ENCODE measurements at regions of chr6 and their contacts with region 1.

Region 1: DNA sequence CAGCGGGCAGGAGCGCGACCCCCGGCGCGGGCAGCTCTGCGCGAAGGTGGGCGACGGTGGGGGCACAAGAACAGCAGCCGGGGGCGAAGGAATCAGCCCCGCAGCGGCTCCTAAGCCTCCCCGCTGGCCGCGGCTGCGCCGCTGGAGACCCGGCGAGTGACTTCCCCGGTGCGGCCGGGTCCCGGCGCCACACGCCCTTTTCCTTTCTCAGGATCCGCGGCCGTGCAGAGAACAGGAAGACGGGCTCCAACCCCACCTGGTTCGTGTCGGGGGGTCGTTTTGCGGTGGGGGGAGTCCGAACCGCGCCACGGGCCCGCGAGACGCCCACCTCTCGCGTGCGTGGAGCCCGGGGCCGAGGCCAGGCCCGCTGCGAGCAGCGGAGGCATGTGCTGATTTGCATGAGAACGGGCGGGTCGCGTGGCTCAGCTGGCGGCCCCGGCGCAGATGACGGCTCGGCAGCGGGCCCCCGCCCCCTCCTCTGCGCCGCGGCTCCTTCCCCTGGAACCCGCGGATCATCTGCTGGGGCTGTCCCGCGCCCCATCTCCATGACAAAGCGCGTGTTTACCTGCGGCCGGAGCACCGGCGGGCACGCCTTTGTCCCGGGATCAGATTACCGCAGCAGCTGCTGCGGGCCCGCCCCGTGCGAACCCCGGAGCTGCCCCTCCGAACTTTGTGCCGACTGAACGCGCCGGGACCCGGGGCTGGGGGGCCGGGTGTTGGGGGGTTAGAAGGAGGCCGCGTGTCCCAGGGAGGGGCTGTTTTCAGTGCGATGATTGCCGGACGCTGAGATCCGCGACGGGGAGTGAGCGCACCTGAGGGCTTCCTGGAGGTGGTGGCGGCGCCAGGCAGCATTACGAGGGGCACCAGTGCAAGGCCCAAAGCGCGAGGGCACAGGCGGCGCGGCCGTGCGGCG is 4.9 kb upstream of the DLL1 start:
- DNase-seq: peak in 5 of 9 donors; percentile 34 to 54 (median 41)
- ATAC-seq: peak; percentile 58
- H3K4me3 ChIP-seq: peak overlapping the region; percentile 58
- H3K4me3 Mint-ChIP-seq: peak overlapping the region; percentile 56 to 97 (median 78)
- H3K27ac ChIP-seq: no peak overlapping the region
- H3K27ac Mint-ChIP-seq: peak overlapping the region in 1 of 9 donors; percentile 60
- H3K4me1 ChIP-seq: peaks cover 11 to 42% of the 10 kb centered on the region in 2 donors
- H3K4me1 Mint-ChIP-seq: peaks cover 11 to 46% (median 34%) of the 10 kb centered on the region in 7 donors
- H3K27me3 ChIP-seq: peaks cover 4 to 9% of the 10 kb centered on the region in 2 donors
- H3K27me3 Mint-ChIP-seq: peaks cover 13 to 80% (median 59%) of the 10 kb centered on the region in 5 donors

Region 2: DNA sequence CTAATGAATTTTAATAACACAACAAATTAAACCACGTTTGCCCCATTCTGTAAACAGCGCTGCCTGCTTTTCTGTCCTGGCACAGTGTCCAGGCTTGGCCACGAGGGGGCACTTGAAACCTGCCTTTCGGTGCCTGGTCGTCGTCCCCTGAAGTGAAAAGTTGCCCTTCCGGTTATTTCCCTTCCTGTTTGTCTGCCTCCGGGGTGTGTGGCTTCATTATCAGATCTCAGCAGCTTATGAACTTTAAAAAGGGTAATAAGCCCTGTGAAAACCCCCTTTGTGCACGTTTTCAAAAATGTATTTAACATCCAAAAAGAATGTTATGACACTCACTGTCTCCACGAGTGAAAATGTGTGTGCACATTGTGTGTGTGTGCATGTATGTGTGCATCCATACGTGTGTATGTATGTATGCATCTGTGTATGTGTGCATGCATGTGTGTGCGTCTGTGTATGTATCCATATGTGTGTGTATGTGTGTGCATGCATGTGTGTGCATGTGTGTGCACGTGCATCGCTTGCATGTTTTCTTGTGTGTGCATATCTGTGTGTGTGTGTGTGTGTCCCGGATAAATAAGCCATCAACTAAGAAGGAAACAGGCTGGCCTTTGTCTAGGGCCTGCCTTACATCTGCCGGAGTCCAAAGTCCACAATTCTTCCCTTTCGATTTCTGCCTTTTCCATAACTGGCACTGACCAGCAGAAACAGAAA is 1400.5 kb before region 1 on chr6:
- CTCF ChIA-PET with region 1: no interaction called
- POLR2A ChIA-PET with region 1: no interaction called
- intact Hi-C with region 1: loop called in 1 of 2 experiments (anchors 1 kb)
- DNase-seq: peak; percentile 57 to 76 (median 72)
- ATAC-seq: peak; percentile 94
- H3K4me3 ChIP-seq: peak overlapping the region; percentile 49
- H3K4me3 Mint-ChIP-seq: peak overlapping the region; percentile 12 to 79 (median 70)
- H3K27ac ChIP-seq: no peak overlapping the region
- H3K27ac Mint-ChIP-seq: peak overlapping the region; percentile 24 to 83 (median 71)
- H3K4me1 ChIP-seq: peaks cover 6% of the 10 kb centered on the region in 2 donors
- H3K4me1 Mint-ChIP-seq: peaks cover 7 to 24% (median 15%) of the 10 kb centered on the region in 7 donors
- H3K27me3 ChIP-seq: no peaks in the 10 kb centered on the region
- H3K27me3 Mint-ChIP-seq: peaks cover 0 to 3% (median 0%) of the 10 kb centered on the region in 5 donors

Region 3: GRCh38 chr6:169831450-169832246 is 464.1 kb before region 1 on chr6:
- CTCF ChIA-PET with region 1: interaction called, 6 read pairs
- POLR2A ChIA-PET with region 1: interaction called, 3 read pairs
- intact Hi-C with region 1: loop called in 1 of 2 experiments (anchors 5 kb)
- DNase-seq: peak; percentile 34 to 73 (median 62)
- ATAC-seq: peak; percentile 76
- H3K4me3 ChIP-seq: no peak overlapping the region
- H3K4me3 Mint-ChIP-seq: no peak overlapping the region
- H3K27ac ChIP-seq: no peak overlapping the region
- H3K27ac Mint-ChIP-seq: peak overlapping the region in 1 of 9 donors; percentile 21
- H3K4me1 ChIP-seq: no peaks in the 10 kb centered on the region
- H3K4me1 Mint-ChIP-seq: peaks cover 0 to 8% (median 4%) of the 10 kb centered on the region in 7 donors
- H3K27me3 ChIP-seq: no peaks in the 10 kb centered on the region
- H3K27me3 Mint-ChIP-seq: peaks cover 41 to 59% (median 47%) of the 10 kb centered on the region in 5 donors

Region 4: GRCh38 chr6:170003027-170003426 is 292.7 kb before region 1 on chr6:
- CTCF ChIA-PET with region 1: no interaction called
- POLR2A ChIA-PET with region 1: no interaction called
- intact Hi-C with region 1: no loop called
- DNase-seq: no peak
- ATAC-seq: peak; percentile 16
- H3K4me3 ChIP-seq: no peak overlapping the region
- H3K4me3 Mint-ChIP-seq: no peak overlapping the region
- H3K27ac ChIP-seq: no peak overlapping the region
- H3K27ac Mint-ChIP-seq: no peak overlapping the region
- H3K4me1 ChIP-seq: no peaks in the 10 kb centered on the region
- H3K4me1 Mint-ChIP-seq: peaks cover 0 to 5% (median 0%) of the 10 kb centered on the region in 7 donors
- H3K27me3 ChIP-seq: no peaks in the 10 kb centered on the region
- H3K27me3 Mint-ChIP-seq: peaks cover 0 to 1% (median 0%) of the 10 kb centered on the region in 5 donors

Region 5: GRCh38 chr6:170087941-170088581 is 207.7 kb before region 1 on chr6:
- CTCF ChIA-PET with region 1: no interaction called
- POLR2A ChIA-PET with region 1: interaction called, 4 read pairs
- intact Hi-C with region 1: loop called (anchors 1 to 5 kb)
- DNase-seq: peak in 8 of 9 donors; percentile 19 to 51 (median 46)
- ATAC-seq: peak; percentile 71
- H3K4me3 ChIP-seq: peak overlapping the region; percentile 68
- H3K4me3 Mint-ChIP-seq: peak overlapping the region; percentile 87 to 99 (median 92)
- H3K27ac ChIP-seq: peak overlapping the region; percentile 68
- H3K27ac Mint-ChIP-seq: peak overlapping the region; percentile 90 to 98 (median 95)
- H3K4me1 ChIP-seq: peaks cover 23 to 26% of the 10 kb centered on the region in 2 donors
- H3K4me1 Mint-ChIP-seq: peaks cover 30 to 47% (median 37%) of the 10 kb centered on the region in 7 donors
- H3K27me3 ChIP-seq: no peaks in the 10 kb centered on the region
- H3K27me3 Mint-ChIP-seq: no peaks in the 10 kb centered on the region

Region 6: DNA sequence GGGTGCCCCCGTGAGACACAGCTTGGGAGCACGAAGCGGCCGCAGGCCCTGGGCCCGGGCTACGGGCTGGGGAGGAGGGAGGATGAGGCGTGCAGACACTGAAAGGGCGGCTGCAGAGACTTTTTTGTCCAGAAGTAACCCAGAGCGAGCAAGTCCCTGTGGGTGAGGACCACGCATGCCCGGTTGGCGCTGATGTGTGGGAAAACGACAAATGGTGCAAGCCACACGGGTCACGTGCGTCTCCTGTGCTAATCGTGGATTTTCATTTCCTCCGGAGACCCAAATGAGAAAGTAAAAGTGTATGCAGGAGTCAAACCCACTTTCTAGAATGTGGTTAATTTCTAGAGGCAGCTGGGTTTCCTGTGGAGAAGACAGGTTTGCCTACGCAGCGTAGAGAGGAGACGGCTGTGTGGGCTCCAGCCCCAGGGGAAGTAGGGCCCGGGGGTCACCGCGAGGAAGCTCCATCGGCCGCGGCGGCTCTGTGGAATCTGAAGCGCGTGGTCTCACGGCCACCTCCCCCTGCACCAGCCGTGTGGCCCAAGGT is 23.9 kb before region 1 on chr6:
- CTCF ChIA-PET with region 1: interaction called, 3 read pairs
- POLR2A ChIA-PET with region 1: interaction called, 35 read pairs
- intact Hi-C with region 1: loop called in 1 of 2 experiments (anchors 1 kb)
- DNase-seq: peak; percentile 52 to 86 (median 81)
- ATAC-seq: peak; percentile 90
- H3K4me3 ChIP-seq: peak overlapping the region; percentile 71
- H3K4me3 Mint-ChIP-seq: peak overlapping the region; percentile 79 to 93 (median 88)
- H3K27ac ChIP-seq: peak overlapping the region; percentile 75
- H3K27ac Mint-ChIP-seq: peak overlapping the region; percentile 77 to 98 (median 94)
- H3K4me1 ChIP-seq: peaks cover 14 to 21% of the 10 kb centered on the region in 2 donors
- H3K4me1 Mint-ChIP-seq: peaks cover 15 to 42% (median 28%) of the 10 kb centered on the region in 7 donors
- H3K27me3 ChIP-seq: no peaks in the 10 kb centered on the region
- H3K27me3 Mint-ChIP-seq: peaks cover 0 to 64% (median 0%) of the 10 kb centered on the region in 5 donors

Region 7: DNA sequence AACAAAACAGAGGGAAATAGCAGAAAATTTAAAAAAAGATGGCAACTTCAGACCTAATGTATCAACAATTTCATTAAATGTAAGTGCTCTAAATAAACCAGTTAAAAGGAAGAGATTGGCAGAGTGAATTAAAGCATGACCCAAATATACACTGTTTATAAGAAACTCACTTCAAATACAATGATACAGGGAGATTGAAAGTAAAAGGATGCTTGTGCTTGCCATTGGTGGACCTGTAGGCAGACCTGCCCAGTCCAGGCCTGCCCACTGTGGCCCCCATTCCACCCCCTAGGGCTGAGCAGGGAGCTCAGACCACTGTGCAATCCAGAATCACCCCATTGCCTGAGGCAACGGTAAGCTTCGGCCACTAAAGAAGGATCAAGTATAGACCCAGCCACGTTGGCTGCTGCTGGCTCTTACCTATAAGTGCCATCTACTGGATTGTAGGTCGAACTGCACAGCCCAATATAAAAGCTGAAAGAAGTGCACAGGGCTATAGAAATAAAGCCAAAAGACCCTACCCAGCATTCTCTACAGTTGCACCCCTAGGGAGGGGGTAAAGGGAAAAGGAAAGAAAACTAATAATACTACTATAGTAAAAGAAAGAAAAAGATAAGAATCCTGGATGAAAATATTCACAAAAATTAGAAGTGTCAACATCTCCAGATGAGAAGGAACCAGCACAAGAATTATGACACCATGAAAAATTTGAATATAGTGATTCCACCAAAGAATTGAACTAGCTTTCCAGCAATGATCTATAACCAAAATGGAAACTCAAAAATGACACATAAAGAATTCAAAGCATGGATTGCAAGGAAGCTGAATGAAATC is 221.2 kb after region 1 on chr6:
- CTCF ChIA-PET with region 1: interaction called, 3 read pairs
- POLR2A ChIA-PET with region 1: no interaction called
- intact Hi-C with region 1: loop called (anchors 1 to 10 kb)
- DNase-seq: peak; percentile 9 to 56 (median 45)
- ATAC-seq: peak; percentile 90
- H3K4me3 ChIP-seq: peak overlapping the region; percentile 45
- H3K4me3 Mint-ChIP-seq: peak overlapping the region in 8 of 10 donors; percentile 35 to 78 (median 60)
- H3K27ac ChIP-seq: no peak overlapping the region
- H3K27ac Mint-ChIP-seq: peak overlapping the region in 1 of 9 donors; percentile 13
- H3K4me1 ChIP-seq: peaks cover 0 to 3% of the 10 kb centered on the region in 2 donors
- H3K4me1 Mint-ChIP-seq: peaks cover 0 to 2% (median 0%) of the 10 kb centered on the region in 7 donors
- H3K27me3 ChIP-seq: no peaks in the 10 kb centered on the region
- H3K27me3 Mint-ChIP-seq: peaks cover 12 to 70% (median 40%) of the 10 kb centered on the region in 5 donors

Measured in naive thymus-derived CD4-positive, alpha-beta T cell (primary cell).